ENCODE measurements at regions of chr2 and their contacts with region 1.

Region 1: GRCh38 chr2:238361877-238362276 is 41.6 kb downstream of the TRAF3IP1 start:
- DNase-seq: no peak
- ATAC-seq: no peak
- H3K4me3 ChIP-seq: no peak overlapping the region
- H3K27ac ChIP-seq: no peak overlapping the region
- H3K4me1 ChIP-seq: no peaks in the 10 kb centered on the region
- H3K27me3 ChIP-seq: no peaks in the 10 kb centered on the region
- CTCF ChIP-seq: no peak

Region 2: GRCh38 chr2:238821391-238821790 is 459.5 kb after region 1 on chr2:
- CTCF ChIA-PET with region 1: no interaction called
- POLR2A ChIA-PET with region 1: interaction called, 15 read pairs
- in situ Hi-C with region 1: no loop called
- intact Hi-C with region 1: no loop called
- DNase-seq: no peak
- ATAC-seq: no peak
- H3K4me3 ChIP-seq: no peak overlapping the region
- H3K27ac ChIP-seq: no peak overlapping the region
- H3K4me1 ChIP-seq: no peaks in the 10 kb centered on the region
- H3K27me3 ChIP-seq: no peaks in the 10 kb centered on the region
- CTCF ChIP-seq: no peak

Measured in Panc1 (cell line).